Transverse colon (tissue), 4 donors: ENCODE measurements at regions of chr1 and their contacts with region 1.

Region 1: DNA sequence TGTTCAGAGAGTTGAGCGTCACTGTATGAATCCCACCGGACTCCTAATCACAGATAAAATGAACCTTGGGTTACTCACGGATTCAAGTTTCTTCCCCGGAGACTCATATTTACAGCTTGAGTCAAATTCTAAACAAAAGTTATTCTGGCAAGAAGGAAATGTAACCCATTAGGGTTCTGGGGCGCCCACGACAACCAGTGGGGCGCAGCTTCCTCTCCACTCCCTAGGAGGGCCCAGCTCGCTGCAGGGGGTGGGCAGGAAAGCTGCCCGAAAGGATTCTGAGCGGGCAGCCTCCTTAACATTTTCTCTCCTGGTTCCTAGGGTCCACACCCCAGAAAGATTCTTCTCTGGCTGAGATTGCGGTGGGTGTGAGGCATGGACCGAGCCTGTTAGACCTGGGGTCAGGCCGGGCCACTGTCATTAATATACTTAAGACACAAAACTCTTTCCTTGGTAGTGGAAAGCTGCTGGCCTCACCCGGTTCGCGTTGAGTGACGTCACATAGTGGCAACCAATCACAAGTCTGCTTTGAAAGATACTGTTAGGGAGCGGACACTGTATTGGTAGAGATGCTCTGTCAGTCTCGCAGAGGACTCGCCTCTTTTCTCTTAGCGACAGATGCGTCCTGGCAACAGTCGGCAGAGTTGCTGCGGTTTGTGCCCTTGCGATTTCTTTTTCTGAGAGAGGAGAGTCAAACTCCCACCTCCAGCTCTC is 13.6 kb upstream of the MCOLN3 start:
- DNase-seq: peak; percentile 93
- H3K4me3 ChIP-seq: peak overlapping the region; percentile 37 to 47 (median 38)
- H3K27ac ChIP-seq: peak overlapping the region; percentile 43 to 70 (median 54)
- H3K4me1 ChIP-seq: peaks cover 0 to 8% (median 0%) of the 10 kb centered on the region in 4 donors
- H3K27me3 ChIP-seq: no peaks in the 10 kb centered on the region
- CTCF ChIP-seq: no peak
- EP300 ChIP-seq: no peak
- POLR2A ChIP-seq: no peak

Region 2: DNA sequence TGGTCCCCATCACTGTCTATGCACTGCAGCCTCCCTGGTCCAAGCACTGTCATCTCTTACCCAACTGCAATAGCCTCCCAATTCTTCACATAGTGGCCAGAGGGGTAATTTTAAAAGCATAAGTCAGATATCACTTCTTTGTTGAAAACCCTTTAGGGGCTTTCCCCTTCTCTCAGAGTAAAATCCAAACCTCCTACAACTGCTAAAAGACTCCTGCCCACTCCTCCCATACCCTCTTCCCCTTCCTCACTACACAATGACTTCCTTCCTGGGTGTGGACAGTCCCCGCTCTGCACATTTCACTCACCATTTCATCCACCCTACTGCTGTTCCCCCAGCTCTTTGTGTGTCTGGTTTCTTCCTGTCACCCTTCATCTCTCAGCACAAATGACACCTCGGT is 73.3 kb before region 1 on chr1:
- in situ Hi-C with region 1: no loop called
- intact Hi-C with region 1: loop called (anchors 2 kb)
- DNase-seq: no peak
- H3K4me3 ChIP-seq: no peak overlapping the region
- H3K27ac ChIP-seq: no peak overlapping the region
- H3K4me1 ChIP-seq: no peaks in the 10 kb centered on the region
- H3K27me3 ChIP-seq: no peaks in the 10 kb centered on the region
- CTCF ChIP-seq: no peak
- EP300 ChIP-seq: no peak
- POLR2A ChIP-seq: no peak